ENCODE measurements at regions of chr21 and their contacts with region 1.

Region 1: GRCh38 chr21:31354604-31355443 is 10.8 kb upstream of the TIAM1 start:
- DNase-seq: peak; percentile 85
- H3K4me3 Mint-ChIP-seq: peak overlapping the region; percentile 38
- H3K27ac Mint-ChIP-seq: peak overlapping the region; percentile 77
- H3K4me1 Mint-ChIP-seq: peaks cover 14% of the 10 kb centered on the region
- H3K27me3 Mint-ChIP-seq: peaks cover 2% of the 10 kb centered on the region

Region 2: DNA sequence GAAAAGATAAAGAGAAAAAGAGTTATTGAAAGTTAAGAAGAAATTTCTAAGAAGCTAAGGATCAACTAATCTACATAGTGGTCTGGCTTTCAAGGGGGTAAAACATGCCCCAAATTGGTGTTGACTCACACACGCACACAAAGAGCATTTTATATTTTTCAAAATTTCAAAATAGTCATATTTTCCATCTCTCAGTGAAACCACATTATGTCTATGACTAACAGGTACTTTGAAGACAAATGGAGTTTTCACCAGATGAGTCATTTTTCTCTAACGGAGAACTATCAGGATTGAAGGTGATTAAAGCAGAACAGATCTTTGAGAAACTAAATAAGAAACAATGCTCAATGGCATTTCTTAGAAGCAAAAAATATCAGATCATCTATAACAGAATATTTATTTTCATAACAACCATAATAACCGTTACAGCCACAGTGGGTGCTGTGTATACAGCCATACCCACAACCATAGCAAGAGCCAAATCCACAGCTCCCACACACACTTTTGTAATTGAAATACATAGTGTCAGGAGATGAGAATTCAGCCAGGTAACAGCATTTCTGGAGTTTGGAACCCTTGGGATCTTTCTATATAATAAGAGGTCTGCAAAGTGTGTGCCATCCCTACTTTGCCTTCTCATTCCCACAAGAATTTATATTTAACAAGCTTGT is 636.5 kb before region 1 on chr21 and contains the start of gene KRTAP21-3:
- intact Hi-C with region 1: loop called (anchors 2 kb)
- DNase-seq: no peak
- H3K4me3 Mint-ChIP-seq: peak within 1 kb of the TSS; percentile 7
- H3K27ac Mint-ChIP-seq: peak within 1 kb of the TSS; percentile 75
- H3K4me1 Mint-ChIP-seq: peaks cover 29% of the 10 kb centered on the region
- H3K27me3 Mint-ChIP-seq: peaks cover 2% of the 10 kb centered on the region
- total RNA-seq, gene KRTAP21-3: not detected in 2 replicates

Region 3: GRCh38 chr21:31293986-31294385 is 60.8 kb before region 1 on chr21:
- intact Hi-C with region 1: loop called (anchors 1 kb)
- DNase-seq: no peak
- H3K4me3 Mint-ChIP-seq: peak overlapping the region; percentile 56
- H3K27ac Mint-ChIP-seq: peak overlapping the region; percentile 86
- H3K4me1 Mint-ChIP-seq: peaks cover 35% of the 10 kb centered on the region
- H3K27me3 Mint-ChIP-seq: no peaks in the 10 kb centered on the region

Region 4: GRCh38 chr21:31335957-31336738 is 18.7 kb before region 1 on chr21:
- intact Hi-C with region 1: loop called (anchors 1 kb)
- DNase-seq: no peak
- H3K4me3 Mint-ChIP-seq: peak overlapping the region; percentile 17
- H3K27ac Mint-ChIP-seq: peak overlapping the region; percentile 67
- H3K4me1 Mint-ChIP-seq: peaks cover 78% of the 10 kb centered on the region
- H3K27me3 Mint-ChIP-seq: no peaks in the 10 kb centered on the region

Region 5: GRCh38 chr21:31509194-31510017 is 154.6 kb after region 1 on chr21:
- intact Hi-C with region 1: loop called (anchors 1 kb)
- DNase-seq: peak; percentile 83
- H3K4me3 Mint-ChIP-seq: peak overlapping the region; percentile 45
- H3K27ac Mint-ChIP-seq: peak overlapping the region; percentile 73
- H3K4me1 Mint-ChIP-seq: peaks cover 51% of the 10 kb centered on the region
- H3K27me3 Mint-ChIP-seq: peaks cover 32% of the 10 kb centered on the region